Dendritic cell treated with granulocyte-macrophage colony-stimulating factor and Interleukin-4, amounts not matched to agents 40 ng/mL and 50 ng/mL, for 4 days (primary cell): ENCODE measurements at regions of chr1 and their contacts with region 1.

Region 1: GRCh38 chr1:102733491-102734236 is 374.7 kb downstream of the COL11A1 start:
- H3K4me3 Mint-ChIP-seq: no peak overlapping the region
- H3K27ac Mint-ChIP-seq: no peak overlapping the region
- H3K4me1 Mint-ChIP-seq: no peaks in the 10 kb centered on the region
- H3K27me3 Mint-ChIP-seq: no peaks in the 10 kb centered on the region

Region 2: GRCh38 chr1:102715150-102715549 is 18.5 kb before region 1 on chr1:
- intact Hi-C with region 1: loop called (anchors 2 kb)
- H3K4me3 Mint-ChIP-seq: no peak overlapping the region
- H3K27ac Mint-ChIP-seq: no peak overlapping the region
- H3K4me1 Mint-ChIP-seq: no peaks in the 10 kb centered on the region
- H3K27me3 Mint-ChIP-seq: no peaks in the 10 kb centered on the region